ENCODE measurements at regions of chr10 and their contacts with region 1.

Region 1: DNA sequence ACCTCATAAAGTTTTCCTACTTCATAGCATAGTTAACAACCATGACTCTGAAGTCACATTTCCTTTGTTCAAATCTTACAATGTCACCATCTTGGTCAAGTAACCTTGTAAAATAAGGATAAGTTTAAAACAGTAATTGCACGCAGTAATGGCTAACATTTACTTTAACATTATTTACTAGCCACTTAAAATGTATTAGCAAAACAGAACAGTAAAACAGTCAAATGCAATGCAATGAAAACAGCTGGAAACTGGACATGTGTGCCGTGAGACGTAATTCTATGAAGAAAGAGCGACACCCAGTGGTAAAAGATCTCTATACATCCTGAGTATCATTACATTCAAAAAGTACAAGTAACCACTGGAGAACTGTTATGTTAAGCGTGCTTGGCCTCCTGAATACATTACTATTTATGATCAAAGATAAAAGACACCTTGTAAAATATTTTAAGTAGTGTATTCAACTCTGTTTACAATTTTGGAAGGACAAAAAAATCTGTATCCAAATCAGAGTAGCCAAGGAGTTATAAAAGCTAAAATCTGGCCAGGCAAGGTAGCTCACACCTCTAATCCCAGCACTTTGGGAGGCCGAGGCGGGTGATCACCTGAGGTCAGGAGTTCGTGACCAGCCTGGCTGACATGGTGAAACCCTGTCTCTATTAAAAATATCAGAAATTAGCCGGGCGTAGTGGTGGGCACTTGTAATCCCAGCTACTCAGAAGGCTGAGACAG is 27.2 kb downstream of the ATE1 start:
- DNase-seq: peak; percentile 37 to 58 (median 40)
- ATAC-seq: peak; percentile 91
- H3K4me3 ChIP-seq: no peak overlapping the region
- H3K27ac ChIP-seq: no peak overlapping the region
- H3K4me1 ChIP-seq: no peaks in the 10 kb centered on the region
- H3K27me3 ChIP-seq: no peaks in the 10 kb centered on the region
- CTCF ChIP-seq: peak; percentile 31 to 60 (median 57); a peak in 5 of 6 replicates
- EP300 ChIP-seq: no peak
- POLR2A ChIP-seq: no peak
- RAD21 ChIP-seq: peak in 1 of 2 experiments; percentile 65; a peak in 3 of 4 replicates

Region 2: GRCh38 chr10:121823993-121824463 is 76.6 kb before region 1 on chr10:
- CTCF ChIA-PET with region 1: no interaction called
- POLR2A ChIA-PET with region 1: no interaction called
- in situ Hi-C with region 1: no loop called
- intact Hi-C with region 1: loop called (anchors 5 kb)
- DNase-seq: peak; percentile 24 to 34 (median 29)
- ATAC-seq: peak; percentile 67; the same call in 2 of the 3 replicates
- H3K4me3 ChIP-seq: no peak overlapping the region
- H3K27ac ChIP-seq: no peak overlapping the region
- H3K4me1 ChIP-seq: no peaks in the 10 kb centered on the region
- H3K27me3 ChIP-seq: no peaks in the 10 kb centered on the region
- CTCF ChIP-seq: peak in 2 of 3 experiments; percentile 57 to 61; a peak in 5 of 6 replicates
- EP300 ChIP-seq: no peak
- POLR2A ChIP-seq: no peak
- RAD21 ChIP-seq: peak in 1 of 2 experiments; percentile 60; a peak in 3 of 4 replicates

Region 3: GRCh38 chr10:122062831-122063674 is 162.4 kb after region 1 on chr10:
- CTCF ChIA-PET with region 1: no interaction called
- POLR2A ChIA-PET with region 1: no interaction called
- in situ Hi-C with region 1: no loop called
- intact Hi-C with region 1: no loop called
- DNase-seq: peak; percentile 65 to 84 (median 70)
- ATAC-seq: peak; percentile 100
- H3K4me3 ChIP-seq: peak overlapping the region; percentile 23; the same call in 1 of the 2 replicates
- H3K27ac ChIP-seq: peak overlapping the region; percentile 62; the same call in 2 of the 3 replicates
- H3K4me1 ChIP-seq: peaks cover 0 to 10% of the 10 kb centered on the region in 2 experiments; a peak in 3 of 5 replicates
- H3K27me3 ChIP-seq: no peaks in the 10 kb centered on the region; a peak in 1 of 5 replicates
- CTCF ChIP-seq: no peak
- EP300 ChIP-seq: peak; percentile 71; the same call in 1 of the 2 replicates
- POLR2A ChIP-seq: no peak
- RAD21 ChIP-seq: no peak

Region 4: GRCh38 chr10:122232769-122233168 is 332.2 kb after region 1 on chr10:
- CTCF ChIA-PET with region 1: no interaction called
- POLR2A ChIA-PET with region 1: no interaction called
- in situ Hi-C with region 1: no loop called
- intact Hi-C with region 1: no loop called
- DNase-seq: no peak
- ATAC-seq: no peak
- H3K4me3 ChIP-seq: no peak overlapping the region
- H3K27ac ChIP-seq: no peak overlapping the region
- H3K4me1 ChIP-seq: no peaks in the 10 kb centered on the region
- H3K27me3 ChIP-seq: peaks cover 0 to 19% of the 10 kb centered on the region in 2 experiments; a peak in 2 of 5 replicates
- CTCF ChIP-seq: no peak
- EP300 ChIP-seq: no peak
- POLR2A ChIP-seq: no peak
- RAD21 ChIP-seq: no peak

Measured in K562 (cell line).